Esophagus muscularis mucosa (tissue), 4 donors: ENCODE measurements at regions of chr11 and their contacts with region 1.

Region 1: DNA sequence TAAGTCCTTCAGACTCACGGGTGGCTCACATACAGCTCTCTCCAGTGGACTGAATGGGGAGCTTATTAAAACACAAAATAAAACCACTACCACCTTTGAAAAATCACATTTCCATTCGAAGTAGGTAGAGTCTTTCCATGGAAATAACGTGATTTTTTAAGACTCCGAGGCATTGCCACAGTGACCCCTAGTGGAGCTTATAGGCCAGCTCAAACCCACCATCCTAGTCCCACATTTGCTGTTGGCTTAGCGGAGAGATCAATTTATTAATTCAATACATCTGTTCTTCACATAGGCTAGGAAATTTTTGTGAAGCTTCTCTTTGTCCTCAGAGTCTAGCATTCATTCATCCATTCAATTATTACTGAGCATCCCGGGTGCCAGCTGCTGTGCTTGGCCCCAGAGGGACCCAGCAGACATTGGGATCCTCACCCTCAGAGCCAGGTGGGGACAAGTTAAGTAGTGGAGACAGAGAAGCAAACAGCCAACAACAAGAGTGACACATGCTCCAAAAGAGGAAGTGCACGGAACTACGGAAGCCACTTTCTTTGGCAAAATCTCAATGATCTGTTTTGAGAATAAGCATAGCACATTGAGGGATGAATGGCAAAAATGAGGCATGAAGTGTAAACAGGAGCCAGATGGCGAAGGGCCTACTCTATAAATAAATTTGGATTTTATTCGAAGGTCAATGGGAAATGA is 10.2 kb upstream of the P4HA3 start:
- DNase-seq: no peak
- H3K4me3 ChIP-seq: no peak overlapping the region
- H3K27ac ChIP-seq: peak overlapping the region in 2 of 4 donors; percentile 19 to 40
- H3K4me1 ChIP-seq: peaks cover 24 to 59% (median 53%) of the 10 kb centered on the region in 4 donors
- H3K27me3 ChIP-seq: no peaks in the 10 kb centered on the region
- CTCF ChIP-seq: peak; percentile 48 to 65 (median 49)
- EP300 ChIP-seq: no peak
- POLR2A ChIP-seq: no peak

Region 2: DNA sequence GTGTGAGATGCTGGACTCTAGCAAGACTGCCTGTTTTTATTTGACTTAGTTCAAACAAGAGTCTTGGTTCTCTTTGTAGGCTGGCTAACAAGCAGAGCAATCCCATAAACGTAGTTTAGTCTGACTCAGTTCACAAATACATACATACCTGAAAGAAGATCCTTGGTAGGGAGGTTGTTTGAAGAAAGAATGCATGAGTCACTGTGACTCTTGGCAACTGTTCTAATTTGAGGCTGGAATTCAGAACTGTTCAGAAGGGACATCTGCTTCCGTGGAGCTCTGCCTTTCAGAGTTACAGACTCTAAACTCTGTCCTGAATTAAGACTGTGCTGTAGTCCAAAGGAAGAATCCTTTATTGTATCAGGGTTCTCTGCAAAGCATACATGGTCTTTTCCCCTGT is 183.1 kb before region 1 on chr11:
- intact Hi-C with region 1: no loop called
- DNase-seq: no peak
- H3K4me3 ChIP-seq: peak overlapping the region in 2 of 4 donors; percentile 3 to 4
- H3K27ac ChIP-seq: peak overlapping the region; percentile 76 to 81 (median 78)
- H3K4me1 ChIP-seq: peaks cover 17 to 57% (median 33%) of the 10 kb centered on the region in 4 donors
- H3K27me3 ChIP-seq: no peaks in the 10 kb centered on the region
- CTCF ChIP-seq: no peak
- EP300 ChIP-seq: no peak
- POLR2A ChIP-seq: no peak

Region 3: DNA sequence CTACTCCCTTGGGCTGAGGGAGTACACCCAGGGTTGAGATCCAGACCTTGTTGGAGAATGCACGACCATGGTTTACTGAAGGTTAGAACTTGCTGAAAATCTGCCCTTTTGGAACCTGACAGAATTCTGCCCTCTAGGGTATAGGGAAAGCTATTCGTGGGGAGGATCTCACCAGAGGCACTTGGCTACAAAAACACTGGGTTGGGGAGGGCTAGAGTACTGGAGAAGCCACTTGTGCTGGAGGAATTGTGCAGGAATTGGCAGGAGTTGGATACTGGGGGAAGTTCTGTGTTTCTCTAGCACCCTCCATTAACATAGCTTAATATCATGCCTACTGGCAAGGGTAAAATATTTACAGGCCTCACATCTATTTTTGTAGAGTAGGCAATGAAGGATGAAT is 94.7 kb before region 1 on chr11:
- intact Hi-C with region 1: no loop called
- DNase-seq: no peak
- H3K4me3 ChIP-seq: no peak overlapping the region
- H3K27ac ChIP-seq: no peak overlapping the region
- H3K4me1 ChIP-seq: no peaks in the 10 kb centered on the region
- H3K27me3 ChIP-seq: no peaks in the 10 kb centered on the region
- CTCF ChIP-seq: no peak
- EP300 ChIP-seq: no peak
- POLR2A ChIP-seq: no peak

Region 4: GRCh38 chr11:74278721-74279161 is 42.9 kb before region 1 on chr11:
- intact Hi-C with region 1: loop called (anchors 5 kb)
- DNase-seq: peak; percentile 93
- H3K4me3 ChIP-seq: no peak overlapping the region
- H3K27ac ChIP-seq: peak overlapping the region; percentile 66 to 74 (median 72)
- H3K4me1 ChIP-seq: peaks cover 0 to 38% (median 27%) of the 10 kb centered on the region in 4 donors
- H3K27me3 ChIP-seq: no peaks in the 10 kb centered on the region
- CTCF ChIP-seq: no peak
- EP300 ChIP-seq: no peak
- POLR2A ChIP-seq: no peak